Calu3 (cell line): ENCODE measurements at regions of chr11 and their contacts with region 1.

Region 1: GRCh38 chr11:33753304-33753967 is 17.2 kb upstream of the CD59 start:
- DNase-seq: no peak
- H3K4me3 Mint-ChIP-seq: no peak overlapping the region
- H3K27ac Mint-ChIP-seq: no peak overlapping the region
- H3K4me1 Mint-ChIP-seq: no peaks in the 10 kb centered on the region
- H3K27me3 Mint-ChIP-seq: no peaks in the 10 kb centered on the region
- CTCF ChIP-seq: no peak

Region 2: GRCh38 chr11:33700425-33701271 is 52.8 kb before region 1 on chr11 and contains the start of gene C11orf91:
- CTCF ChIA-PET with region 1: no interaction called
- intact Hi-C with region 1: no loop called
- DNase-seq: peak; percentile 99
- H3K4me3 Mint-ChIP-seq: peak within 1 kb of the TSS; percentile 70
- H3K27ac Mint-ChIP-seq: peak within 1 kb of the TSS; percentile 94
- H3K4me1 Mint-ChIP-seq: peaks cover 88% of the 10 kb centered on the region
- H3K27me3 Mint-ChIP-seq: no peaks in the 10 kb centered on the region
- CTCF ChIP-seq: no peak
- total RNA-seq, gene C11orf91: 5.8 and 7.6 TPM in 2 replicates

Region 3: GRCh38 chr11:34182921-34183685 is 429.7 kb after region 1 on chr11:
- CTCF ChIA-PET with region 1: interaction called, 11 read pairs
- intact Hi-C with region 1: no loop called
- DNase-seq: no peak
- H3K4me3 Mint-ChIP-seq: no peak overlapping the region
- H3K27ac Mint-ChIP-seq: no peak overlapping the region
- H3K4me1 Mint-ChIP-seq: peaks cover 4% of the 10 kb centered on the region
- H3K27me3 Mint-ChIP-seq: no peaks in the 10 kb centered on the region
- CTCF ChIP-seq: no peak